ENCODE measurements at regions of chr19 and their contacts with region 1.

Region 1: GRCh38 chr19:13861732-13862531 is 15.0 kb upstream of the NANOS3 start:
- H3K4me3 Mint-ChIP-seq: peak overlapping the region; percentile 87
- H3K27ac Mint-ChIP-seq: peak overlapping the region; percentile 97
- H3K4me1 Mint-ChIP-seq: peaks cover 51% of the 10 kb centered on the region
- H3K27me3 Mint-ChIP-seq: peaks cover 28% of the 10 kb centered on the region

Region 2: DNA sequence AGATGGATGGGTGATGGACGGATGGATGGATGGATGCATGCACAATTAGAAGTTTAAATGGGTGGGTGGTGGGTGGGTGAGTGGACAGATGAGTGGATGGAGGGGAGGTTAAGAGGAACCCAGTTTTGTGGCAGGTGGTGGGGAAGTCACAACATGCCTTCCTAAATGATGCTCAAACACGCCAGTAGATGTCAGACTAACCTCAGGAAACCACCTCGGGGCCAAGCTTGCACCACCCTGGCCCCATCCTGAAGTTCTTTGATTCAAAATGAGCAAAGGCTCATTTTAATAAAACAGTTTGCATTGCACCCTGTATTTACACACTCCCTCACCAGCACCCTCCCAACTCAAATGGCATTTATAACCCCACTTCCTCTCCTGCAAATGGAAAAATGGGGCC is 264.3 kb before region 1 on chr19:
- intact Hi-C with region 1: loop called (anchors 10 kb)
- H3K4me3 Mint-ChIP-seq: no peak overlapping the region
- H3K27ac Mint-ChIP-seq: no peak overlapping the region
- H3K4me1 Mint-ChIP-seq: no peaks in the 10 kb centered on the region
- H3K27me3 Mint-ChIP-seq: peaks cover 2% of the 10 kb centered on the region

Region 3: GRCh38 chr19:13784731-13785452 is 77.0 kb before region 1 on chr19:
- intact Hi-C with region 1: loop called (anchors 1 kb)
- H3K4me3 Mint-ChIP-seq: peak overlapping the region; percentile 42
- H3K27ac Mint-ChIP-seq: peak overlapping the region; percentile 78
- H3K4me1 Mint-ChIP-seq: peaks cover 35% of the 10 kb centered on the region
- H3K27me3 Mint-ChIP-seq: peaks cover 4% of the 10 kb centered on the region

Region 4: DNA sequence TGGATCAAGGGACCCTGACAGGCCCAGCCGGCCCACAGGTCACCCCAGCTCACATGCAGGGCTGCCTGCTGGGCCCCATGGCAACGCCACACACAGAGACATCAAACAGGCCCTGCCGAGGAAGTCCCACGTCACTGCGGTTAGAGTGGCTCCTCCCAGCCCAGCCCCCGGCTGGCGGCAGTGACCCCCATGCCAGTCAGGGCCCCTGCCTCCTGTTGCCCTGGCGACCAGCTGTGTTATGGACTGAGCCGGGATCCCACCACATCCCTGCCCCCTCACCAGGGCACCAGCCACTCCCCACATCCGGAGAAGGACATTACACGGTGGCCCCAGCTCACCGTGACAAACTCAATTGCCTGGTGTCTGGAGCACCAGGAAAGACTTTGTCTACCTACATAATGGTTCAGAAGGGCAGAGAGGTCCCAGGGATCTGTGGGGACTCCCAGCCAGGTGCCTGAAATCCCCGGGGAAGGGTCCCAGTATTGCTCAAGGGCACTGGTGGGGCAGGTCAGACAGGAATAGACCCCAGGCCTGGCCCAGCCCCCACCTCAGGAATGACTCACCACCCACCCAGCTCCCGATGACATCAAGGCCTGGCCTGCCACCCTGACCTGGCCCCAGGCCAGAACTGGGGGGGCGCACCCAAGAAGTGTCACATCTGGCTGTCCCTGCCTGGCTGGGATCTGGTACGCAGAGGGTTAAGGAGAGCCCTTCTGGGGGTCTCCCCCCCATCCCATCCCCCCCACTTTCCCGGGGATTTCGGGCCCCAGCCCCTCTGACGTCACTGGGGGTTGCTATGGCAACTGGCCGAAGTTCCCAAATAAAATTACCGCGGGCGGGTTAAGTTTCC is 15.2 kb before region 1 on chr19:
- intact Hi-C with region 1: loop called (anchors 2 kb)
- H3K4me3 Mint-ChIP-seq: peak overlapping the region; percentile 72
- H3K27ac Mint-ChIP-seq: peak overlapping the region; percentile 100
- H3K4me1 Mint-ChIP-seq: peaks cover 67% of the 10 kb centered on the region
- H3K27me3 Mint-ChIP-seq: no peaks in the 10 kb centered on the region